Gastrocnemius medialis (tissue), 4 donors: ENCODE measurements at regions of chr1 and their contacts with region 1.

Region 1: GRCh38 chr1:217681806-217682205 is 50.7 kb downstream of the SPATA17 start:
- DNase-seq: no peak
- ATAC-seq: no peak
- H3K4me3 ChIP-seq: no peak overlapping the region
- H3K27ac ChIP-seq: no peak overlapping the region
- H3K4me1 ChIP-seq: no peaks in the 10 kb centered on the region
- H3K27me3 ChIP-seq: no peaks in the 10 kb centered on the region
- CTCF ChIP-seq: no peak
- POLR2A ChIP-seq: no peak

Region 2: DNA sequence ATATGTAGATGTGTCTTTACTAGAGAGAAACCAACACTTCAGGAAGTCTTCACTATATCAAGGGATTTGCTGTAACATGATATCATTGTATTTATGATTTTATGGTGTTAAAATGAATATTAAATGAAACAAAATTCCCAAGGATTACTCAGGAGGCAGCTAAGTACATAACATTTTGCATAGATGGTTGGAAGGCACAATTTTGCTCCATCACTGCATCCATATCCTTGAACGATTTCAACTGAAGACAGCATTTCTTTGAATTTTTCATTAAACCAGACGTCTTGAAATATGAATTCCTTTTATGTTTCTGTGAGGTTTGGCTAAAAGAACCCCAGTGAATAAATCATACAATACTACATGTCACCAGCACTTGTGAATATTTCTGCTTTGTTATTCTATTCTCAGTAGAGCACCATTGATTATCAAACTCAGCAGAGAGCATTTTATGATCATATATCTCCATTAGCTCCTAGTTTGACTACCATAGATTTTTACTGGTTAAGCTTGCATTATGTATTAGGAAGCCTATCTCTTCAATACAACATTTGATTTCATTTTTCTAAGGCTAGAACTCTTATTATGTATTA is 13.4 kb before region 1 on chr1:
- in situ Hi-C with region 1: no loop called
- intact Hi-C with region 1: no loop called
- DNase-seq: no peak
- ATAC-seq: no peak
- H3K4me3 ChIP-seq: no peak overlapping the region
- H3K27ac ChIP-seq: no peak overlapping the region
- H3K4me1 ChIP-seq: no peaks in the 10 kb centered on the region
- H3K27me3 ChIP-seq: no peaks in the 10 kb centered on the region
- CTCF ChIP-seq: no peak
- POLR2A ChIP-seq: no peak

Region 3: GRCh38 chr1:217867446-217867995 is 185.7 kb after region 1 on chr1:
- in situ Hi-C with region 1: no loop called
- intact Hi-C with region 1: no loop called
- DNase-seq: no peak
- ATAC-seq: no peak
- H3K4me3 ChIP-seq: no peak overlapping the region
- H3K27ac ChIP-seq: no peak overlapping the region
- H3K4me1 ChIP-seq: no peaks in the 10 kb centered on the region
- H3K27me3 ChIP-seq: no peaks in the 10 kb centered on the region
- CTCF ChIP-seq: no peak
- POLR2A ChIP-seq: no peak

Region 4: DNA sequence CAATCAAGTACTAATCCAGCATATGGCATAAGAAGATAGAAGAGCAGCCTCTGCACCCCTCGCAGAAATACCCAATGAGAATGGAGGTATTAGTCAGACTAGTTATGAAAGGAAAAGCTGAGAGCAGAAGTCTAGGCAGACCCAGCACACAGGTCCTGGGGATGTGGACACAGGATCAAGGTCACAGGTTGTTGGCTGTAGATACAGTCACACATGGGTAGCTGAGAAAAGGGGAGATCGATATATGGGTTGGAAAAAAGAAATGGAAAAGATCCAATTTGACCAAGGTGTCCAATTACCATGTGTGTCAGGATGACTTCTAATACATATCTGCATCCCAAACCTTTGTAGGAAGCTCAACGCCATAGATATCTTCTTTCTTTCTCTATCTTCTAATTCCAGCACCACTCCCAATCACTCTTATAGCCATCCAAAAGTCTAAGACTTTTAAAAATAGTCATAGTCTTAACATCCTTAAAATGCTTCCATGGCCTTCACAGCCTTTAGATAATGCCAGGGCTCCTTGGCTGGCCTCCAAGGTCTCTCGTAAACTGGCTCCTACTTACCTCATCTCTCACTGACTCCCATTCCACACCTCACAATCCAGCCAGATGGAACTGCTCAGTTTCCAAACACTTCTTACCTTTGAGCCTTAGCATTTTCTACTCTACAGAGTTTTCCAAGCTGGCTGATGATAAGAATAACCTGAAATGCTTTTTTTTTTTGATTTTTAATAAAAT is 1939.4 kb after region 1 on chr1:
- in situ Hi-C with region 1: no loop called
- intact Hi-C with region 1: loop called (anchors 5 kb)
- DNase-seq: no peak
- ATAC-seq: no peak
- H3K4me3 ChIP-seq: no peak overlapping the region
- H3K27ac ChIP-seq: no peak overlapping the region
- H3K4me1 ChIP-seq: no peaks in the 10 kb centered on the region
- H3K27me3 ChIP-seq: no peaks in the 10 kb centered on the region
- CTCF ChIP-seq: no peak
- POLR2A ChIP-seq: no peak